Adrenal gland (tissue), 19 donors: ENCODE measurements at regions of chr11 and their contacts with region 1.

Region 1: DNA sequence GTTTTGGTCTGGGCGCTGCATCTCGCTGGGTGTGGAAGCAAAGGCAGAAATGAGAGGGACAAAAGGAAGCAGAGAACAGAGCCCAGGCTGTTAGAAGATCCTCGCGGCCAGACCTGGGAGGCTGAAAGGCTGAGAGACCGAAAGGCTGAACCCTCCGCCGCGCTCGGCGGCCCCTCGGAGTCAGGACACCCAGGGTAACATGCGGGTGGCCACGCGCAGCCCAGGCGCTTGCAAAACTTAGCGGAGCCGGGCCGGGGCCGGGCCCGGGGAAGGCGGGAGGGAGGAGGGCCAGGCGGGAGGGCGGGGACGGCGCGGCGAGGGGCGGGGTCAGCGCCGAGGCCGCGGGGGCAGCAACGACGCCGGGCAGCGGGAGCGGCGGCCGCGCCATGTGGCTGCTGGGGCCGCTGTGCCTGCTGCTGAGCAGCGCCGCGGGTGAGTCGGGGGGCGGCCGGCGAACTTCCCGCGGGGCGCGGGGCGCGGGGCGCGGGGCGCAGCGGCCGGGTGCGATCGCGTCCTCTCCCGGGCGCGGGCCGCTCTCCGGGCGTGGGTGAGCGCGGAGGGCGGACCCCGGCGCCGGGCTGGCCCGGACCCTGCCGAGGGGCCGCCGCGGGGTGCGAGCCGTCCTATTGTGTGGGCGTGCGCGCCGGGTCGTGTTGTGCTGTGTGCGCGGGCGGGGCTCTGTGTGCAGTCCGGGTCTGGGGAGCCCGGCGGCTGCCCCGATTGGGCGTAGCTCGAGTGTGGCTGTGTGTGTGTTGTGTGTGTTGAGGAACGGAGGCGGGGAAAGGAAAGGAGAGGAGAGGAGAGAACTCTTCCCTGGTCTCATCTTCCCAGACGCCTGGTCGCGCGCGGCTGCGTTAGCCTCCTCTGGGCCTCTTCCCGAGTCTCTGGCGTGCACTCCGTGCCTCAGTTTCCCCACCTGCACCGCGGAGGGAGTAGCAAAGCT is at the start of gene LDLRAD3:
- DNase-seq: peak; percentile 78 to 85 (median 84)
- H3K4me3 ChIP-seq: peak within 1 kb of the TSS; percentile 16 to 74 (median 41)
- H3K27ac ChIP-seq: peak within 1 kb of the TSS in 4 of 5 donors; percentile 63 to 91 (median 79)
- H3K4me1 ChIP-seq: peaks cover 0 to 18% of the 10 kb centered on the region in 2 donors
- H3K27me3 ChIP-seq: no peaks in the 10 kb centered on the region
- CTCF ChIP-seq: no peak
- POLR2A ChIP-seq: peak in 1 of 2 donors; percentile 34
- total RNA-seq, gene LDLRAD3: 6.1 to 16.4 (median 10.4) TPM

Region 2: GRCh38 chr11:35815556-35816315 is 128.2 kb before region 1 on chr11:
- intact Hi-C with region 1: no loop called
- DNase-seq: peak in 6 of 7 donors; percentile 13 to 57 (median 33)
- H3K4me3 ChIP-seq: no peak overlapping the region
- H3K27ac ChIP-seq: peak overlapping the region in 2 of 5 donors; percentile 11 to 18
- H3K4me1 ChIP-seq: peaks cover 0 to 33% of the 10 kb centered on the region in 2 donors
- H3K27me3 ChIP-seq: no peaks in the 10 kb centered on the region
- CTCF ChIP-seq: no peak
- POLR2A ChIP-seq: no peak

Region 3: GRCh38 chr11:36023922-36024321 is 79.9 kb after region 1 on chr11:
- intact Hi-C with region 1: loop called in 1 of 2 experiments (anchors 10 kb)
- DNase-seq: no peak
- H3K4me3 ChIP-seq: no peak overlapping the region
- H3K27ac ChIP-seq: no peak overlapping the region
- H3K4me1 ChIP-seq: peaks cover 0 to 11% of the 10 kb centered on the region in 2 donors
- H3K27me3 ChIP-seq: no peaks in the 10 kb centered on the region
- CTCF ChIP-seq: no peak
- POLR2A ChIP-seq: no peak